OCI-LY7 (cell line): ENCODE measurements at regions of chr4 and their contacts with region 1.

Region 1: DNA sequence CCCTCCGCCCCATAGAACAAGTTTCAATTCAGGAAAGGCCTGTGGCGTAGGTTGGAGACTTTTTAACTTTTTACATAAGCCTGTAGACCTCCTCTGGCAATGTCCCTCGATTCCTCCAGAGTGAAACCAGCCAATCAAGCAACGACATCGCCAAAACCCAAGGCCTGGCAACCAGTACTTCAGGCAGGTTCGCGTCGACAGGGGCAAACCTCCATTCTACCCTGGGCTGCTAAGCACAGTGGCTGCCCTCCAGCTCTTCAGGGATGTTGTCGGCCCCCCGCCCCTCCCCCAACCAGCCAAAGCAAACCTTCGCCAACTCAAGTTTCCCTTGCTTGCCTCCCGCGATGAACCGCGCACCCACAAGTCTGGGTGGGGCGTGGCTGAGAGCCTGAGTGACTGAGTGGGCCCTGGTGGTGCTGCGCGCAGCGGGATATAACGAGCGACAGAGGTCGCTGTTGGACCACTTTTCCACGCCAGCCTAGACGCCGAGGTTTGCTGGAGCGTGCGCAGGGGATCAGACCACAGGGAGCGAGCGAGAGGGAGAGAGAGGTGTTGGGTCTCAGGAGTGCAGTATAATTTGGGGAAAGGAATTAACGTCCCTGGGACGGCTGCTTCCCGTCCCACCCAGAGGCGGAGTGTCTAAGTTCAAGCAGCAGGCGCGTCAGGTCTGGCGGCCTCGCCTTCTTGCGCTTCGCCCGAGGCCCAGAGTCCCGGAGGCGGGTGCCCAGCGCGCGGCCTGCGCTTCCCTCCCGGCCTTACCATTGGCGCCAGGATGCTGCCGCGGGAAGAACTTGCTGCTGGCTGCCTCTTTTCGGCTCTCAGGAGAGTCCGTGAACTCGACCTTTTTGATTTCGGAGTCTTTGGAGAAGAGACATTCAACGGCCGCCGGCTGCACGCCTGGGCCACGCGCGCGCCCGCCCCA is 9.0 kb upstream of the PITX2 start:
- DNase-seq: peak; percentile 83
- H3K4me3 ChIP-seq: peak overlapping the region; percentile 46
- H3K27ac ChIP-seq: no peak overlapping the region
- H3K4me1 ChIP-seq: peaks cover 3% of the 10 kb centered on the region
- CTCF ChIP-seq: peak; percentile 90

Region 2: GRCh38 chr4:110381784-110382183 is 250.1 kb before region 1 on chr4:
- CTCF ChIA-PET with region 1: no interaction called
- POLR2A ChIA-PET with region 1: no interaction called
- intact Hi-C with region 1: no loop called
- DNase-seq: no peak
- H3K4me3 ChIP-seq: no peak overlapping the region
- H3K27ac ChIP-seq: no peak overlapping the region
- H3K4me1 ChIP-seq: no peaks in the 10 kb centered on the region
- CTCF ChIP-seq: no peak

Region 3: GRCh38 chr4:110898290-110898689 is 266.4 kb after region 1 on chr4:
- CTCF ChIA-PET with region 1: no interaction called
- POLR2A ChIA-PET with region 1: no interaction called
- intact Hi-C with region 1: loop called (anchors 5 kb)
- DNase-seq: peak; percentile 19
- H3K4me3 ChIP-seq: no peak overlapping the region
- H3K27ac ChIP-seq: no peak overlapping the region
- H3K4me1 ChIP-seq: peaks cover 30% of the 10 kb centered on the region
- CTCF ChIP-seq: no peak

Region 4: DNA sequence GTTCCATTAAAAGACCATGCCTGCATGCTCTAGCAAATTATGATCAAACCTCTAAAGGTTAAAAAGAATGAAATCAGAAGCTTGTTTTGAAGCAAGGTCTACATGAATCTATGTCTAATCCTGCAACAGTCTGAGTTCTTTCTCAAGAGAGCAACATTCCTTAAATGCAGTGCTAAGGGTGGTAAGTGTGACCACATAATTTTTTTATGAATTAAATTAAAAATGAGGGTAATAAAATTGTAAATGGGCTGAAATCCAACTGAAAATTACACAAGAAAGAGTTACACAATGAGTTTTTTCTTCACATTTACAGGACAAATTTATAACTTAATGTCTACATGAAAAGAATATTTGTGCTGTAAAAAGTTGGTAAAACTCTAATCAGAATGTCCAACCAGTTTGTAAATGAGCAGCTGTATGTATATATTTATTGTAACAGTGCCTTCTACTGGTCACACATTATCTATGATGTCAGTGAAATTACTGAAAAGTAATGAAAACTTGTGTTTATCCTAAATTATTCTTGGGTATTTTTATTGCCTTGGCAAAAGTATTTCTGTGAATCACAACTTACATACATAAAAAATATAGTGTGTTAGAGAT is 327.3 kb after region 1 on chr4:
- CTCF ChIA-PET with region 1: no interaction called
- POLR2A ChIA-PET with region 1: no interaction called
- intact Hi-C with region 1: loop called (anchors 1 kb)
- DNase-seq: peak; percentile 36
- H3K4me3 ChIP-seq: no peak overlapping the region
- H3K27ac ChIP-seq: no peak overlapping the region
- H3K4me1 ChIP-seq: no peaks in the 10 kb centered on the region
- CTCF ChIP-seq: peak; percentile 86

Region 5: DNA sequence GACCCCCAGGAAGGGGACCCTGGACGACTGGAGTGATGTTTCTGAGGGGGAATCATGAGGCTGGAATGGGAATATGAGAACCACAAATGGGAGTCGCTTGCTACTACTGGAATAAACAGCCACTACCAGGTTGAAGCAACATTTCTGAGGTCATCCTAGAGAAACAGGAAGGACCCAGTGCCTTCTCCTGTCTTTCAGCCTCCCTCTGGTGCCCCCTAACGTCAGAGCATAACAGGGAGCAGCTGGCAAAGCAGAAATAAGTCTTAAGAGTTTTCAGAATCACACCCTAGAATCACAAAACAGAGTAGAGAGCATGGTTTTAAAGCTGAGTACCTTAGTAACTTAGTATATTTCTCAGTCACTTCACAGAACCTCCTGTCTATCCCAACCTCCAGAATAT is 338.8 kb after region 1 on chr4:
- CTCF ChIA-PET with region 1: no interaction called
- POLR2A ChIA-PET with region 1: no interaction called
- intact Hi-C with region 1: loop called (anchors 2 kb)
- DNase-seq: peak; percentile 71
- H3K4me3 ChIP-seq: no peak overlapping the region
- H3K27ac ChIP-seq: no peak overlapping the region
- H3K4me1 ChIP-seq: no peaks in the 10 kb centered on the region
- CTCF ChIP-seq: peak; percentile 90

Region 6: DNA sequence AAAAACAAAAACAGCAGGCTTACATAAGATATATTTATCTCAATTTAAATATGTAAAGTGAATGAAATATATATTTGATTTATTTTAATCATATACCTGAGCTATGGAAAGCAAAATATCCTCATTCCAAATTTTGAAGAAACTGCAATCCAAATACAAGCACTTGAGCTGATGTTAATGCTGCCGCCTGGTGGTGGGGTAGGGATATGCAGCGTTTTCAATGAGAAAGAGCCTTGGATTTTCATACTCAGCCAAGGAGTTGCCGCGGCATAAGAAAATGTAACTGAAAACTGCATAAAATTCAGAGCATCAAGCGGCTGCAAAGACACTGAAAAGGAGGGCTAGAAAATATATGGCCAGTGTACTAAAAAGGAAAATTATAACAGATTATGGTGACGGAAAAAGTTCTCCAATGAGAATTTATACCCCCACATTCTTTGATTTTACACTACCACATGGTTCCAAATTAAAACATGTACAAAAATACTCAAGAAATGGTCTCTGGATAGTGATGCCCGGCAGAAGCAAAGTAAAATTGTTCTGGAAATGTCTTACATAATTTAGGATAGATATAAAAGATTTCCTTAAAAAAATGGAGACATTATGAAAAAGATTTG is 651.3 kb after region 1 on chr4:
- CTCF ChIA-PET with region 1: no interaction called
- POLR2A ChIA-PET with region 1: no interaction called
- intact Hi-C with region 1: loop called (anchors 2 kb)
- DNase-seq: peak; percentile 55
- H3K4me3 ChIP-seq: no peak overlapping the region
- H3K27ac ChIP-seq: no peak overlapping the region
- H3K4me1 ChIP-seq: no peaks in the 10 kb centered on the region
- CTCF ChIP-seq: peak; percentile 91

Region 7: GRCh38 chr4:111631215-111631999 is 999.6 kb after region 1 on chr4:
- CTCF ChIA-PET with region 1: no interaction called
- POLR2A ChIA-PET with region 1: no interaction called
- intact Hi-C with region 1: loop called (anchors 10 kb)
- DNase-seq: peak; percentile 6
- H3K4me3 ChIP-seq: no peak overlapping the region
- H3K27ac ChIP-seq: no peak overlapping the region
- H3K4me1 ChIP-seq: no peaks in the 10 kb centered on the region
- CTCF ChIP-seq: peak; percentile 75